Activated CD8-positive, alpha-beta T cell treated with anti-CD3 and anti-CD28 coated beads, Interleukin-2, amount 10 ng/mL, durations not matched to agents 7 days and 5 days (primary cell): ENCODE measurements at regions of chr14 and their contacts with region 1.

Region 1: GRCh38 chr14:32076278-32077080 is 625 bp upstream of the ARHGAP5 start:
- DNase-seq: peak; percentile 80
- ATAC-seq: peak; percentile 67
- H3K4me3 Mint-ChIP-seq: peak overlapping the region; percentile 93
- H3K27ac Mint-ChIP-seq: peak overlapping the region; percentile 83
- H3K4me1 Mint-ChIP-seq: peaks cover 31% of the 10 kb centered on the region
- H3K27me3 Mint-ChIP-seq: peaks cover 5% of the 10 kb centered on the region

Region 2: GRCh38 chr14:32246751-32247150 is 170.3 kb after region 1 on chr14:
- CTCF ChIA-PET with region 1: interaction called, 211 read pairs
- POLR2A ChIA-PET with region 1: no interaction called
- DNase-seq: no peak
- ATAC-seq: no peak
- H3K4me3 Mint-ChIP-seq: no peak overlapping the region
- H3K27ac Mint-ChIP-seq: no peak overlapping the region
- H3K4me1 Mint-ChIP-seq: no peaks in the 10 kb centered on the region
- H3K27me3 Mint-ChIP-seq: no peaks in the 10 kb centered on the region